ENCODE measurements at regions of chr10 and their contacts with region 1.

Region 1: DNA sequence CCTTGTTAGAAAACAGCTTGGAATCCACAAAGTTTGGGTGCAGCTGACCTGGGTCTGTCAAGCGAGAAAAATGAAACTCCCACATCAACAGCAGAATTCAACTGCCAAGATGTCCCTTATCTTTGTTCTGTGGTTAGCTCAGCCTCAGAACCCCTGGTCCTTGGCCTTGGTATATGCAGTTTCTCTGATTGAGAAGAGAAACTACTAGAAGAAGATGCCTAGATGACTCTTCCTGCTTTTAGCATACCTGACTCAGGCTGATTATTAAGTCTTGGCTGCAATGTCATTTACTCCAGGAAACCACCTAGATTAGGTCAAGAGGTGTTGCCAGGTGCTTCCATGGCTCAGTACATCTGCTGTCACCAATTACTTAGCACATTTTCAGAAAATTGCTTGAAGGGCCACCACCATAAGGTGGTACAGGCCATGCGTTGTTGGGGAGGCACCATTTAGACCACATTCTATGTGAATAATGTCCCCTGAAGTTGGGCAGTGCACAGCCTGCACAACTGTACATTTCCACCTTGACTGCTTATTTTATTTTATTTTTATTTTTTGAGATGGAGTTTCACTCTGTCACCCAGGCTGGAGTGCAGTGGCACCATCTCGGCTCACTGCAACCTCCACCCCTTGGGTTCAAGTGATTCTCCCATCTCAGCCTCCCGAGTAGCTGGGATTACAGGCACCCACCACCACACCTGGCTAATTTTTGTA is 59.4 kb upstream of the ZNF438 start:
- DNase-seq: no peak
- ATAC-seq: no peak
- H3K4me3 ChIP-seq: no peak overlapping the region
- H3K4me3 Mint-ChIP-seq: peak overlapping the region in 1 of 10 donors; percentile 55
- H3K27ac ChIP-seq: no peak overlapping the region
- H3K27ac Mint-ChIP-seq: peak overlapping the region in 1 of 9 donors; percentile 82
- H3K4me1 ChIP-seq: no peaks in the 10 kb centered on the region
- H3K4me1 Mint-ChIP-seq: peaks cover 0 to 33% (median 5%) of the 10 kb centered on the region in 7 donors
- H3K27me3 ChIP-seq: no peaks in the 10 kb centered on the region
- H3K27me3 Mint-ChIP-seq: peaks cover 0 to 5% (median 0%) of the 10 kb centered on the region in 5 donors

Region 2: DNA sequence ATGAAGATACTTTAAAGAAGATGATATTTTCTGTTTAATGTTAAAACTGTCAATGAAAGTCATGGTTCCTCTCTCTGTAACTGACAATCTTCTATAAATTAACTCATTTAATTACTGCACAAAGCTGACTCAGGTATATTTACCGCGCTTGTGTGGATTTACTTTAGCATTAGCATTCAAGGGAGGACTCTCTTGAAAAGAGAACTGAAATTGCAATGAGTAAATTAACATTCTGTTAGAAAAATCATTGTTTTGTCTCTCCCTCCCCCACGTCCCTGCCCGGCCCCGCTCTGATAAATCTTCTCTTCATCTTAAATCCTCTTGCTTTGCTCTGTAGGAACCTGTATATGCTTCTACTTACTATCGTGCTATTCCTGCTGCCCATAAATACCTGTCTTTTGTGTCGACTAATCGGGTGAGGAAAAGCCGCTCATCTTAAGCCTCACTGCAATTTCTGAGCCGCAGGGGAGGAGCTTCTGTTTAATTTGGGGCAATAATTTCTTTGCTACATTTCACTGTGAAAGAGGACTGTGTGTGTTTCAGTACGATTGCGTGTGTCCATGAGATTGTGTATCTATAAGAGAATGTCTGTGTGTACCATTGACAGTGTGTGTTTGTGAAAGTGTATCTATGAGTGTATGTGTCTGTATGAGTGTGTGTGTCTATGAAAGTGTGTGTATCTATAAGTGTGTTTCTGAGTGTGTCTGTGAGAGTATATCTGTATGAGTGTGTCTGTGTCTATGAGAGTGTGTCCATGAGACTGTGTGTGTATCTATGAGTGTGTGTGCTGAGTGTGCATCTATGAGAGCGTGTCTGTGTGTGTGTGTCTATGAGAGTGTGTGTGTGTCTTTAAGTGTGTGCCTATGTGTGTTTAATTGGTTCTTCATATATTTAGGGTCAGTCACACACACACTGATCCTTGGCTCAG is 415.0 kb before region 1 on chr10:
- CTCF ChIA-PET with region 1: no interaction called
- POLR2A ChIA-PET with region 1: no interaction called
- intact Hi-C with region 1: no loop called
- DNase-seq: no peak
- ATAC-seq: peak; percentile 20
- H3K4me3 ChIP-seq: no peak overlapping the region
- H3K4me3 Mint-ChIP-seq: no peak overlapping the region
- H3K27ac ChIP-seq: no peak overlapping the region
- H3K27ac Mint-ChIP-seq: no peak overlapping the region
- H3K4me1 ChIP-seq: no peaks in the 10 kb centered on the region
- H3K4me1 Mint-ChIP-seq: peaks cover 0 to 8% (median 0%) of the 10 kb centered on the region in 7 donors
- H3K27me3 ChIP-seq: no peaks in the 10 kb centered on the region
- H3K27me3 Mint-ChIP-seq: peaks cover 3 to 15% (median 7%) of the 10 kb centered on the region in 5 donors

Region 3: GRCh38 chr10:31101123-31101522 is 10.1 kb after region 1 on chr10:
- CTCF ChIA-PET with region 1: no interaction called
- POLR2A ChIA-PET with region 1: no interaction called
- intact Hi-C with region 1: loop called in 1 of 2 experiments (anchors 1 kb)
- DNase-seq: peak in 1 of 9 donors; percentile 74
- ATAC-seq: peak; percentile 58
- H3K4me3 ChIP-seq: no peak overlapping the region
- H3K4me3 Mint-ChIP-seq: peak overlapping the region in 1 of 10 donors; percentile 85
- H3K27ac ChIP-seq: no peak overlapping the region
- H3K27ac Mint-ChIP-seq: peak overlapping the region in 3 of 9 donors; percentile 28 to 95 (median 29)
- H3K4me1 ChIP-seq: no peaks in the 10 kb centered on the region
- H3K4me1 Mint-ChIP-seq: peaks cover 0 to 66% (median 4%) of the 10 kb centered on the region in 7 donors
- H3K27me3 ChIP-seq: no peaks in the 10 kb centered on the region
- H3K27me3 Mint-ChIP-seq: peaks cover 0 to 4% (median 0%) of the 10 kb centered on the region in 5 donors